GM10248 (cell line): ENCODE measurements at regions of chr19 and their contacts with region 1.

Region 1: DNA sequence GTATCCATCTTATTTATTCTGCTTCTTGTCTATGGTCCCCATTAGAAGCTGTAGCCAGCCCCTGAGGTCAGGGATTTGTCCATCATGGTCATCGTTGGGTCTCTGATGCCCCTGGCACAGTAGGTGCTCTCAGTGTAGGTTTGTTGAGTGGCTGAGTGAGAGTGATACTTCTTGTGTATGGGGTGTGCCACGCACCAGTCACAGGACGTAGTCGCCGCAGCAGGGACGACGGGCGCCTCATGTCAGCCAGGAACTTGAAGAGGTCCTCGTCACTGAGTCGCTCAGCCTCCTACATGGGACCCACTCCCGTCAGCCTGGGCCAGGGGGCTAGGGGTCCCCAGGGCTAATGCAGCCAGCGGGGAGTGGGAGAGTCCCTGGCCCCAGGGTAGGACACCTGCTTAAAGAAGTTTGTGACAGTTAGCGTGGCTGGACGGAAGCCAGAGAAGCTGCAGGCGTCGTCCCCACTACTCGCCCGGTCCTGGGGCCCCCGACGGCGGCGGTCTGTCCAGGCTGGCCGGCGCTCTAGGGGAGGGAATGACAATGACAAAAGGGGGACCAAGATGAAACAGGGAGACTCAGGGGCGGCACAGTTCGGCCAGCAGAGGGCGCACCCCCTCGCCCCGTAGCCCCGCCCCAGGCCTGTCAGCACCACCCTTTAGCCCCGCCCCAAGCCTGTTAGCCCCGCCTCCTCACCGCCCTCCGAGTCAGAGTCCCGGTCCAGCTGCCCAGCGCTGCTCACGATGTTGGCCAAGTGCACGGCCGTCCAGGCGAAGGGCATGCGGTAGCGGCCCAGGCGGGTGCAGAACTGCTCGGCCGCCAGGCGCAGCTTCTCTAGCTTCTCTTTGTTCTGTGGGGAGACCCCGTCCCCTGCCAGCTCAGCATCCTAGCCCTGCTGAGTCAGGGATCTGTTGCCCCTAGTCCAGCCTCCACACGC is 3.7 kb downstream of the ANGPTL8 start:
- DNase-seq: peak; percentile 99
- CTCF ChIP-seq: peak; percentile 41

Region 2: DNA sequence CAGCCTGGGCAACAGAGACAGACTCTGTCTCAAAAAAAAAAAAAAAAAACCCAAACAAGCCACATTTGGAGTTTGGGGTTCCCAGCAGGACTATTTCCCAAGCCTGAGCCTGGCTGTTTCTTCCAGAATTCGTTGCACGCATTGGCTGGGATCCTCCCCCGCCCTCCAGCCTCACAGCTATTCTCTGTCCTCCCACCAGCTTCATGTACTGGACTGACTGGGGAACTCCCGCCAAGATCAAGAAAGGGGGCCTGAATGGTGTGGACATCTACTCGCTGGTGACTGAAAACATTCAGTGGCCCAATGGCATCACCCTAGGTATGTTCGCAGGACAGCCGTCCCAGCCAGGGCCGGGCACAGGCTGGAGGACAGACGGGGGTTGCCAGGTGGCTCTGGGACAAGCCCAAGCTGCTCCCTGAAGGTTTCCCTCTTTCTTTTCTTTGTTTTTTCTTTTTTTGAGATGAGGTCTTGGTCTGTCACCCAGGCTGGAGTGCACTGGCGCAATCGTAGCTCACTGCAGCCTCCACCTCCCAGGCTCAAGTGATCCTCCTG is 127.2 kb before region 1 on chr19:
- CTCF ChIA-PET with region 1: no interaction called
- POLR2A ChIA-PET with region 1: no interaction called
- DNase-seq: no peak
- CTCF ChIP-seq: no peak

Region 3: DNA sequence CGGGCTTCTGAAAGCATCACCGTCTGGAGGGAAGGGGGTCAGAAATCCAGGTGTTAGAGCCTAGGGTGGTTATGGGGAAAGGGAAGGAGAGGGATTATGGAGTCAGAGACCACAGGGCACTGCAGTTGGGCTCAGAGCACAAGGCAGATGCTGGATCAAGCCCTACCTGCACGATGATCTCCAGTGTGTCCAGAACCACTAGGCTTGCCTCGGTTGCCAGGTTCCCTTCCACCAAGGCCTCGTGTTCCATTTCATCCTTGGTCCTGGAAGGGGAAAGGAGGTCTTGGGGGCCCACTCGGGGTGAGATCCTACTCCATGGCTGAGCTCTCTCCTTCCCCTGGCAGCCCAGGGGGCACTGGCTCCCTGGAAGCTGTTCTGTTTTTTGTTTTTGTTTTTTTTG is 28.7 kb before region 1 on chr19:
- CTCF ChIA-PET with region 1: no interaction called
- POLR2A ChIA-PET with region 1: no interaction called
- DNase-seq: no peak
- CTCF ChIP-seq: no peak

Region 4: GRCh38 chr19:11227201-11227886 is 15.8 kb before region 1 on chr19:
- CTCF ChIA-PET with region 1: interaction called, 12 read pairs
- POLR2A ChIA-PET with region 1: no interaction called
- DNase-seq: no peak
- CTCF ChIP-seq: no peak

Region 5: DNA sequence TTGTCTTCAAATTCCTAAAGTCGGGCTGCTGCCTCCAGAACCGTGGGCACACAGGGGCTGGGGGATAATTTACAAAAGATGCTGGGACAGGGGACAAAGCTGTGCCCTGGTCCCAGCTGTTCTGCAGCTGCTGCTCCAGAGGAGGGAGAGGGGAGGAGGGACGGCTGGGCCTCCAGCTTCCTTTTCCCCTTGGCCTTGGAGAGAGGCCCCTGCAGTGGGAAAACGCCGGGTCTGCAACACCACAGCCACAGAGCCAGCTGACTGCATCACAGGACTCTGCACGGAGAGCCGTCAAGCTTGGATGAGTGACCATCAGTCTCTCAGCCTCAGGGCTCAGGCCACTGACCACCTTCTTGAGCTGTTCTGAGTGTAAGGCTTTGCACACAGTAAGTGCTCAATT is 13.1 kb after region 1 on chr19:
- CTCF ChIA-PET with region 1: interaction called, 12 read pairs
- POLR2A ChIA-PET with region 1: no interaction called
- DNase-seq: no peak
- CTCF ChIP-seq: no peak